Panc1 (cell line): ENCODE measurements at regions of chr15 and their contacts with region 1.

Region 1: DNA sequence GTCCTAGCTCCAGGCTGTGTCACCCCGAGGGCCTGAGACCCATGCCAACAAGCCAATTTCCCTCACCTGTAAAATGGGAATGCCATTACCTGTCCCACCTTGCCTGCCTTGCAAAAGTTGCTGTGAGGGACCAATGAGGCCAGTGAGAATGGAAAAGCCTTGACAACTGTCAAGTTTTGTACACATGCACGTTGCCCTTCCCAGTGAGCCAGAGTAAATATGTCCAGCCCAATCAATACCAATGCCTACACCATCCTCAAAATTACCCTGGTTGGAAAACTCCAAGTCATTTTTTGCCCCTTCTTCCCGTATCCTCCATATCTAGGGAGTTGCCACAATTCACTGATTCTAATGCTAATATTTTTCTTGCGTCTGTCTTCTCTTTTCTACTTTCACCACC is 73.5 kb upstream of the RASGRF1 start:
- DNase-seq: no peak
- ATAC-seq: no peak
- H3K4me3 ChIP-seq: no peak overlapping the region
- H3K27ac ChIP-seq: no peak overlapping the region
- H3K4me1 ChIP-seq: peaks cover 2% of the 10 kb centered on the region; the same call in 1 of the 2 replicates
- H3K27me3 ChIP-seq: peaks cover 2% of the 10 kb centered on the region; the same call in 1 of the 2 replicates
- CTCF ChIP-seq: no peak

Region 2: GRCh38 chr15:79204886-79205675 is 41.0 kb after region 1 on chr15:
- CTCF ChIA-PET with region 1: interaction called, 10 read pairs
- POLR2A ChIA-PET with region 1: no interaction called
- in situ Hi-C with region 1: no loop called
- intact Hi-C with region 1: no loop called
- DNase-seq: no peak
- ATAC-seq: no peak
- H3K4me3 ChIP-seq: no peak overlapping the region
- H3K27ac ChIP-seq: no peak overlapping the region
- H3K4me1 ChIP-seq: no peaks in the 10 kb centered on the region
- H3K27me3 ChIP-seq: peaks cover 26% of the 10 kb centered on the region
- CTCF ChIP-seq: no peak